CD4-positive, alpha-beta T cell (primary cell): ENCODE measurements at regions of chr10 and their contacts with region 1.

Region 1: DNA sequence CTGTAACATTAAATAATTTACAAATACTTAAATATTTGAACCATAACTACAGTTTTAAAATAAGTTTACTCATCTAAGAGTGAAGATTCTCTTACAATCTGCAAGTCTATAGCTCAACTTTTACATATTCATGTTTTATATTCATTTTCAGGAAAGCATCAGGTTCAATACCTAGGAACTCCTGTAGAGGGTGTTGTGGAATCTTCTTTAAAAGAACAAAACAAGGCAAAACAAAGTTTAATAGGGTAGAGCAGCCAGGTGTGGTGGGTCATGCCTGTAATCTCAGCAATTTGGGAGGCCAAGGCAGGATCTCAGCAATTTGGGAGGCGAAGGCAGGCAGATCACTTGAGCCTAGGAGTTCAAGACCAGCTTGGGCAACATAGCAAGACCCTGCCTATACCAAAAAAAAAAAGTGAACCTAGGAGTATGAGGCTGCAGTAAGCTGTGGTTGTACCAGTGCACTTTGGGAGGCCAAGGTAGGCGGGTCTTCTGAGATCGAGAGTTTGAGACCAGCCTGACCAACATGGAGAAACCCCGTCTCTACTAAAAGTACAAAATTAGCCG is 45.1 kb downstream of the ST8SIA6 start:
- DNase-seq: peak in 4 of 14 experiments; percentile 41 to 65 (median 62)
- ATAC-seq: peak; percentile 92
- H3K4me3 ChIP-seq: no peak overlapping the region
- H3K4me3 Mint-ChIP-seq: no peak overlapping the region
- H3K27ac ChIP-seq: no peak overlapping the region
- H3K27ac Mint-ChIP-seq: peak overlapping the region; percentile 56
- H3K4me1 ChIP-seq: peaks cover 6% of the 10 kb centered on the region
- H3K4me1 Mint-ChIP-seq: peaks cover 29% of the 10 kb centered on the region
- H3K27me3 ChIP-seq: no peaks in the 10 kb centered on the region
- H3K27me3 Mint-ChIP-seq: no peaks in the 10 kb centered on the region
- CTCF ChIP-seq: peak; percentile 74

Region 2: GRCh38 chr10:17138460-17139042 is 270.7 kb before region 1 on chr10:
- CTCF ChIA-PET with region 1: no interaction called
- POLR2A ChIA-PET with region 1: no interaction called
- intact Hi-C with region 1: no loop called
- DNase-seq: no peak
- ATAC-seq: no peak
- H3K4me3 ChIP-seq: no peak overlapping the region
- H3K4me3 Mint-ChIP-seq: no peak overlapping the region
- H3K27ac ChIP-seq: no peak overlapping the region
- H3K27ac Mint-ChIP-seq: no peak overlapping the region
- H3K4me1 ChIP-seq: no peaks in the 10 kb centered on the region
- H3K4me1 Mint-ChIP-seq: peaks cover 26% of the 10 kb centered on the region
- H3K27me3 ChIP-seq: no peaks in the 10 kb centered on the region
- H3K27me3 Mint-ChIP-seq: no peaks in the 10 kb centered on the region
- CTCF ChIP-seq: no peak

Region 3: DNA sequence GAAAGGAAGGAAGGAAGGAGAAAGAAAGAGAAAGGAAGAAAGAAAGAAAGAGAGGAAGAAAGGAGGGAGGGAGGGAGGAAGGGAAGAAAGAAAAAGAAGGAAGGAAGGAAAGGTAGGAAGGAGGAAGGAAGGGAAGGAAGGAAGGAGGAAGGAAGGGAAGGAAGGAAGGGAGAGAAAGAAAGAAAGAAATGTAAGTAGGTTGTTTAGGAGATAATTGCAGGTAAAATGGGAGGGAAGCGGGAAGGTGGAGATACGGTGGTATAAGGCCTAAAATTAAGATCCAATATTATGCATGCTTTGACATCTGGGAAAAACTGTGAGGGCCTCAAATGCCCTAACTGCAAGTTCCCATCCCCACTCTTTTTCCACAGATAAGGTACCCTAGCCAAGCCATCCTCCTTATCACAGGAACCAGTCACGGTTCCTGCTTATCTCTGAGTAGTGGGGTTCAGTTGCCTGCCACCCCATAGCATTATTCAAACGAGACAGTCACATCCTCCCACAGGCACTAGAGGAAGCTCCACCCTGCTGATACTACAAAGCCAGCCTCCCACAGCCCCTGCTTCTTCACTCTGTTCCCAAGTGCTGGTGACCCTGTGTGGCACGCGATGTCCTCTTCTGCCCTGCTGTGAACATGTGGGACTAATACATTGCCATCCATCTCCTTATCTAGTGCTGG is 16.5 kb after region 1 on chr10:
- CTCF ChIA-PET with region 1: interaction called, 32 read pairs
- POLR2A ChIA-PET with region 1: interaction called, 41 read pairs
- intact Hi-C with region 1: loop called (anchors 1 kb)
- DNase-seq: peak; percentile 16 to 79 (median 55)
- ATAC-seq: peak; percentile 77
- H3K4me3 ChIP-seq: no peak overlapping the region
- H3K4me3 Mint-ChIP-seq: peak overlapping the region; percentile 43
- H3K27ac ChIP-seq: peak overlapping the region; percentile 44 to 67
- H3K27ac Mint-ChIP-seq: peak overlapping the region; percentile 93
- H3K4me1 ChIP-seq: peaks cover 67% of the 10 kb centered on the region
- H3K4me1 Mint-ChIP-seq: peaks cover 86% of the 10 kb centered on the region
- H3K27me3 ChIP-seq: no peaks in the 10 kb centered on the region
- H3K27me3 Mint-ChIP-seq: no peaks in the 10 kb centered on the region
- CTCF ChIP-seq: no peak

Region 4: DNA sequence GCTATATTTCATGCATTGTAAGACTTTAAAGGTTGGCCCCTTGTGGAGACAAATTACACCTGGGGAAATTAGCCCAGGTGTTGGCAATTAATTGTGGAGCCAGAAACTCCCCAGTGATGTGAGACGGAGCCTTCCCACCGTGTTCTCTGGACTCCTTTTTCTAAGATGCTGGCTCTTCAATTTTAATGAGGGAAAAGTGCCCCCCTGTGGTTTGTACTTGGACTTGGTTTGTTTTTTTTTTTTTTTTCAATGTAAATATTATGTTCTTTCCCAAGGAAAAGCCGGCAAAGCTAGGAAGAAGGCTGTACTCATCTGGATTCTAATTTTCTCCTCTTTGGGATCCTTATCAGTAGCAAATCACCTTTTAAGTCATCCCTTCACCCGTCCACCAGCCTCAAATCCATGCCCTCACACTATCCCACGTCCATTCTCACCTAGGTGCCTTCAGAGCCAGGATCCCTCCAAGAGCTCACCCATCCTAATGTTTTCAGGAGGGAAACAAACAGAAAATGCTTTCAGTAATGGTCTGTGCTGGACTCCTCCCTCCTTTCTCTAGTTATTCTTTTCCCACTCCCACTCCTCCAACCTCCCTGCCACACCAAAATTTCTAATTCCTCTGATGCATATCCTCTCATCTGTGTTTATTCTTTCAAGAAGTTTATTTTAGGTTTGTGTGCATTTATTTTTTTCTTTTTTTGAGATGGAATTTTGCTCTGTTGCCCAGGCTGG is 65.5 kb after region 1 on chr10:
- CTCF ChIA-PET with region 1: no interaction called
- POLR2A ChIA-PET with region 1: no interaction called
- intact Hi-C with region 1: loop called in 1 of 2 experiments (anchors 2 kb)
- DNase-seq: no peak
- ATAC-seq: no peak
- H3K4me3 ChIP-seq: no peak overlapping the region
- H3K4me3 Mint-ChIP-seq: no peak overlapping the region
- H3K27ac ChIP-seq: no peak overlapping the region
- H3K27ac Mint-ChIP-seq: no peak overlapping the region
- H3K4me1 ChIP-seq: no peaks in the 10 kb centered on the region
- H3K4me1 Mint-ChIP-seq: no peaks in the 10 kb centered on the region
- H3K27me3 ChIP-seq: peaks cover 0 to 7% of the 10 kb centered on the region in 2 experiments
- H3K27me3 Mint-ChIP-seq: peaks cover 21% of the 10 kb centered on the region
- CTCF ChIP-seq: no peak

Region 5: DNA sequence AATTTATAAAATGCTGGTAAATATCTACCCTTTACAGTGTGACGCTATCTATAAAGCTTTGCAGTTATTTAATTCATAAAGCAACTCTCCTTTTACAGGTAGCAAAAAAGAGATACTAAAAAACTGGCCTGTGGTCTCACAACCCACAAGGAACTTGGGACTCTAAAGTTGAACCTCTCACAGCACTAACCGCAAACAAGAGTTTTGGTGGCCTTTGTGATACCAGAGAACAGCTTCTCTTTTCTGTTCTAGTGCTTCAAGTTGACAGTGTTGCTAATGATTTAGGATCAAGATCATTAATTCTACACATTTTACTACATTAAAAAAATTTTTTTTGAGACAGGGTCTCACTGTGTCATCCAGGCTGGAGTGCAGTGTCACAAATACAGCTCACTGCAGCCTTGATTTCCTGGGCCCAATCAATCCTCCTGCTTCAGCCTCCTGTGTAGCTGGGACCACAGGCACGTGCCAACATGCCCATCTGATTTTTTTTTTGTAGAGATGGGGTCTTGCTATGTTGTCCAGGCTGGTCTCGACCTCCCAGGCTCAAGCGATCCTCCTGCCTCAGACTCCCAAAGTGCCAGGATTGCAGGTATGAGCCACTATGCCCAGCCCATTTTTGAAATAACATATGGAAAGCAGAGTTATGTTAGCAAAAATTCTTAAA is 101.1 kb after region 1 on chr10:
- CTCF ChIA-PET with region 1: no interaction called
- POLR2A ChIA-PET with region 1: no interaction called
- intact Hi-C with region 1: no loop called
- DNase-seq: peak in 3 of 14 experiments; percentile 20 to 44 (median 22)
- ATAC-seq: no peak
- H3K4me3 ChIP-seq: no peak overlapping the region
- H3K4me3 Mint-ChIP-seq: no peak overlapping the region
- H3K27ac ChIP-seq: no peak overlapping the region
- H3K27ac Mint-ChIP-seq: no peak overlapping the region
- H3K4me1 ChIP-seq: peaks cover 22% of the 10 kb centered on the region
- H3K4me1 Mint-ChIP-seq: peaks cover 19% of the 10 kb centered on the region
- H3K27me3 ChIP-seq: no peaks in the 10 kb centered on the region
- H3K27me3 Mint-ChIP-seq: no peaks in the 10 kb centered on the region
- CTCF ChIP-seq: no peak